ENCODE measurements at regions of chrX and their contacts with region 1.

Region 1: DNA sequence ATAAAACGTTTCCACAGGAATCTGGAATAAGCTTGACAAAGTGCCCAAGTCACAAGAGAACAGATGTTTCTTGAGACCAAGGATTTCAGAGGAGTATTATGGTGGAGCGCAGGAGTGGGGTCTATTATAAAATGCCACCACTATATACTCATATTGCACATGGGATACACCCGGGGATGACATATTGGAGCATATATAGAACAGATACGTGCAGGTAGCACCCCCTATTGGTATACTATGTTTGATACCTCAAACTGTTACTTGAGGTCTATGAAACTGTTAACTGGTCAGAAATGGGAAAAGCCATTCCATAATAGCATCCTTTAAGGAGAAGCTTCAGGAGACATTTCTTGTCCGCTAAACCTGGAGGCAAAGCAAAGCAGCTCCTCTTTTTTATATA is 86.0 kb downstream of the PCYT1B start:
- DNase-seq: peak; percentile 22 to 36 (median 25)
- ATAC-seq: peak; percentile 84
- H3K4me3 ChIP-seq: no peak overlapping the region
- H3K27ac ChIP-seq: no peak overlapping the region
- H3K4me1 ChIP-seq: no peaks in the 10 kb centered on the region
- H3K27me3 ChIP-seq: peaks cover 0 to 27% of the 10 kb centered on the region in 2 experiments; a peak in 3 of 5 replicates
- CTCF ChIP-seq: peak; percentile 16 to 53 (median 24); a peak in 3 of 6 replicates
- EP300 ChIP-seq: no peak
- POLR2A ChIP-seq: no peak
- RAD21 ChIP-seq: peak; percentile 37 to 61; a peak in 3 of 4 replicates

Region 2: DNA sequence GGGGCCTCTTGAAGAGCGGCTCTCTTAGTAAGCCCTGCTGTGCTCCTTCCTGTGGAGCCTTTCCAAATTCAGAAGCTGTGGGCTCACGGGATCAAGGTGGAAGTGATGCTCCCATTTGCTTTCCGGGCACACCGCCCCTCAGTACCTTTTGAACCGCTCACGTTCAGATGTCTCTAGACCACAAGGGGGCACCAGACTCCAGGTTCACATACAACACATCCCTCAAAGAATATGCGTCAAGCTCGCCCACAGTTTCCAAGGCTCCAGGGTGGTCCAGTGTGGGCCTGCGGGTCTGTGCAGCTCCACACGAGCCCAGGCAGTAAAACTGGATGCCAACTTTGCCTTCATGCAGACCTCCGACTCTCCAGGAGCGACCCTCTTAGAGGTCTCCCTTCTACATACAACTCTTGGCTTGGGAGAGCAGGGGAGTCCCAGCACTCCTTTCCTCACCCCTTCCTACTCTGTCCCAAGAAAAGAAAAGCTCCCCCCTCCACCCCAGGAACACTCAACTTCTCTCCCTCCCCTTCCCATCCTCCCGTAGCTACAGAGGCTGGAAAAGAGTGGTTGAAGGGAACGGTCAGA is 189.6 kb before region 1 on chrX:
- CTCF ChIA-PET with region 1: interaction called, 3 read pairs
- POLR2A ChIA-PET with region 1: interaction called, 4 read pairs
- in situ Hi-C with region 1: no loop called
- intact Hi-C with region 1: loop called (anchors 2 kb)
- DNase-seq: peak; percentile 34 to 64 (median 42)
- ATAC-seq: peak; percentile 90
- H3K4me3 ChIP-seq: no peak overlapping the region
- H3K27ac ChIP-seq: no peak overlapping the region
- H3K4me1 ChIP-seq: no peaks in the 10 kb centered on the region
- H3K27me3 ChIP-seq: peaks cover 0 to 9% of the 10 kb centered on the region in 2 experiments; a peak in 3 of 5 replicates
- CTCF ChIP-seq: peak; percentile 59 to 68 (median 64)
- EP300 ChIP-seq: no peak
- POLR2A ChIP-seq: no peak
- RAD21 ChIP-seq: peak; percentile 20 to 60; a peak in 2 of 4 replicates

Region 3: GRCh38 chrX:24395775-24396174 is 165.3 kb before region 1 on chrX:
- CTCF ChIA-PET with region 1: no interaction called
- POLR2A ChIA-PET with region 1: interaction called, 3 read pairs
- in situ Hi-C with region 1: no loop called
- intact Hi-C with region 1: loop called (anchors 5 kb)
- DNase-seq: peak; percentile 40 to 54 (median 50)
- ATAC-seq: peak; percentile 81
- H3K4me3 ChIP-seq: no peak overlapping the region
- H3K27ac ChIP-seq: no peak overlapping the region
- H3K4me1 ChIP-seq: no peaks in the 10 kb centered on the region
- H3K27me3 ChIP-seq: peaks cover 0 to 16% of the 10 kb centered on the region in 2 experiments; a peak in 3 of 5 replicates
- CTCF ChIP-seq: peak; percentile 67 to 85 (median 67)
- EP300 ChIP-seq: no peak
- POLR2A ChIP-seq: no peak
- RAD21 ChIP-seq: peak; percentile 82 to 89

Region 4: GRCh38 chrX:24515447-24515846 is 45.7 kb before region 1 on chrX:
- CTCF ChIA-PET with region 1: interaction called, 4 read pairs
- POLR2A ChIA-PET with region 1: no interaction called
- in situ Hi-C with region 1: no loop called
- intact Hi-C with region 1: loop called (anchors 5 kb)
- DNase-seq: peak in 1 of 4 experiments; percentile 6
- ATAC-seq: 0 out of 3 replicates have a peak, but pooled peaks have one; percentile 39
- H3K4me3 ChIP-seq: no peak overlapping the region
- H3K27ac ChIP-seq: no peak overlapping the region
- H3K4me1 ChIP-seq: no peaks in the 10 kb centered on the region
- H3K27me3 ChIP-seq: no peaks in the 10 kb centered on the region; a peak in 1 of 5 replicates
- CTCF ChIP-seq: peak in 2 of 3 experiments; percentile 39 to 40; a peak in 2 of 6 replicates
- EP300 ChIP-seq: no peak
- POLR2A ChIP-seq: no peak
- RAD21 ChIP-seq: peak in 1 of 2 experiments; percentile 60; a peak in 2 of 4 replicates

Measured in K562 (cell line).